ENCODE measurements at regions of chr6 and their contacts with region 1.

Region 1: GRCh38 chr6:44172731-44173500 is 14.3 kb downstream of the CAPN11 start:
- DNase-seq: peak; percentile 95
- ATAC-seq: peak; percentile 93

Region 2: GRCh38 chr6:44219815-44220784 is 47.2 kb after region 1 on chr6:
- intact Hi-C with region 1: loop called (anchors 1 kb)
- DNase-seq: no peak
- ATAC-seq: no peak

Region 3: DNA sequence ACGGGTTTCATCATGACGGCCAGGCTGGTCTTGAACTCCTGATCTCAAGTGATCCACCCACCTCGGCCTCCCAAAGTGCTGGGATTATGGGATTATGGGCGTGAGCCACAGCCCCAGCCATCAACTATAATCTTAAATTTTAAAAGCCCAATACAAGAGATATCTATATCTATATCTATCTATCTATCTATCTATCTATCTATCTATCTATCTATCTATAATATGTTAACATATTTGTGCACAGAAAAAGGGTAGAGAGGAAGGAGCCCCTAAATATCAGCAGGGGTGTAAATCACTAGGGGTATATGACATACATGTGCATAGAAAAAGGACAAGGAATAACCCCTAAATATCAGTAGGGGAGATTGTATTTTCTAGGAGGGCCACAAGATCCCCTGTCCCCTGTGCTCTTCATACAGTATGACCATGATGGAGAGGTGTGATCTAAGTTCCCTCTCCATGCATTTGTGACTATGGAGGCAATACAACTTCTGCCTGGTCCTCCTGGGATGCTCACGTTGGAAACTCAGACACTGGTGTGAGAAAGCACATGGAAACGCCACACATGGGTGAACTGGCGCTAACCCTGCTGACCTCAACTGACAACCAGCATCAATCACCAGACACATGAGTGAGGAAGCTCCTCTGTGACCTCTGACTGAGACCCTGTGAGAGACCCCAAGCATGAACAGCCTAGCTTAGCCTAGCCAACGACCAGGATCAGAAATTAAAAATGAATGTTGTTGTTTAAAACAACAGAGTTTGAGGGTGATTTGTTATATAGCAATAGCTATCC is 168.4 kb after region 1 on chr6:
- intact Hi-C with region 1: loop called (anchors 1 kb)
- DNase-seq: no peak
- ATAC-seq: no peak

Measured in sciatic nerve (tissue), 2 donors.